A549 (cell line): ENCODE measurements at regions of chr17 and their contacts with region 1.

Region 1: GRCh38 chr17:39527220-39527813 is 66.0 kb downstream of the CDK12 start:
- DNase-seq: peak in 1 of 2 experiments; percentile 37
- ATAC-seq: peak; percentile 72 to 80
- H3K4me3 ChIP-seq: no peak overlapping the region
- H3K27ac ChIP-seq: no peak overlapping the region
- H3K4me1 ChIP-seq: no peaks in the 10 kb centered on the region
- CTCF ChIP-seq: peak; percentile 60
- EP300 ChIP-seq: no peak
- POLR2A ChIP-seq: no peak
- RAD21 ChIP-seq: peak in 1 of 2 experiments; percentile 25; a peak in 1 of 5 replicates

Region 2: DNA sequence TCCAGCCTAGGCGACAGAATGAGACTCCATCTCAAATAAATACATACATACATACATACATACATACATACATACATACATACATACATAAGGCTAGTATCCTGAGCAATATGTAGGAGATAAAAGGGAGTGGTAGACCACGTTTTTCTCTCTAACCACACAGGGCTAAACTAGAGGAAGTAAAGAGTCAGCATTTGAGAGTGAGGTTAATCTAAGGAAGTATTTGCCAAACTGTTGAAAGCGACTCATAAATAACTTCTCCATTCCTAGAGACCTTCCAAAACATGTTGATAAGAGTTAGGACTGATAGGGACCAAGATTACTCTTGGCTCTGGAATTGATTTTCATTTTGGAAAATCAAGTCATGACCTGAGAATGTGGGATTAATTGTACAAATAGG is 11.5 kb after region 1 on chr17:
- CTCF ChIA-PET with region 1: interaction called, 10 read pairs
- POLR2A ChIA-PET with region 1: no interaction called
- DNase-seq: no peak
- ATAC-seq: no peak; a peak in 1 of 6 replicates
- H3K4me3 ChIP-seq: no peak overlapping the region
- H3K27ac ChIP-seq: no peak overlapping the region
- H3K4me1 ChIP-seq: no peaks in the 10 kb centered on the region
- CTCF ChIP-seq: no peak
- EP300 ChIP-seq: no peak
- POLR2A ChIP-seq: no peak
- RAD21 ChIP-seq: no peak